Mammary epithelial cell (primary cell): ENCODE measurements at regions of chr13 and their contacts with region 1.

Region 1: GRCh38 chr13:26749285-26749684 is 11.3 kb downstream of the GPR12 start:
- DNase-seq: no peak
- H3K4me3 ChIP-seq: no peak overlapping the region
- H3K27ac ChIP-seq: no peak overlapping the region
- H3K4me1 ChIP-seq: no peaks in the 10 kb centered on the region
- H3K27me3 ChIP-seq: peaks cover 2% of the 10 kb centered on the region
- CTCF ChIP-seq: no peak

Region 2: GRCh38 chr13:26762745-26763330 is 13.6 kb after region 1 on chr13:
- CTCF ChIA-PET with region 1: no interaction called
- dilution Hi-C with region 1: no loop called
- in situ Hi-C with region 1: no loop called
- intact Hi-C with region 1: no loop called
- DNase-seq: no peak
- H3K4me3 ChIP-seq: no peak overlapping the region
- H3K27ac ChIP-seq: no peak overlapping the region
- H3K4me1 ChIP-seq: peaks cover 6% of the 10 kb centered on the region
- H3K27me3 ChIP-seq: peaks cover 38% of the 10 kb centered on the region
- CTCF ChIP-seq: no peak

Region 3: GRCh38 chr13:26867451-26868091 is 118.3 kb after region 1 on chr13:
- CTCF ChIA-PET with region 1: no interaction called
- dilution Hi-C with region 1: loop called (anchors 10 kb)
- in situ Hi-C with region 1: no loop called
- intact Hi-C with region 1: no loop called
- DNase-seq: peak; percentile 14
- H3K4me3 ChIP-seq: no peak overlapping the region
- H3K27ac ChIP-seq: no peak overlapping the region
- H3K4me1 ChIP-seq: no peaks in the 10 kb centered on the region
- H3K27me3 ChIP-seq: peaks cover 3% of the 10 kb centered on the region
- CTCF ChIP-seq: no peak